Right ventricle myocardium superior (tissue), 1 donor: ENCODE measurements at regions of chr2 and their contacts with region 1.

Region 1: DNA sequence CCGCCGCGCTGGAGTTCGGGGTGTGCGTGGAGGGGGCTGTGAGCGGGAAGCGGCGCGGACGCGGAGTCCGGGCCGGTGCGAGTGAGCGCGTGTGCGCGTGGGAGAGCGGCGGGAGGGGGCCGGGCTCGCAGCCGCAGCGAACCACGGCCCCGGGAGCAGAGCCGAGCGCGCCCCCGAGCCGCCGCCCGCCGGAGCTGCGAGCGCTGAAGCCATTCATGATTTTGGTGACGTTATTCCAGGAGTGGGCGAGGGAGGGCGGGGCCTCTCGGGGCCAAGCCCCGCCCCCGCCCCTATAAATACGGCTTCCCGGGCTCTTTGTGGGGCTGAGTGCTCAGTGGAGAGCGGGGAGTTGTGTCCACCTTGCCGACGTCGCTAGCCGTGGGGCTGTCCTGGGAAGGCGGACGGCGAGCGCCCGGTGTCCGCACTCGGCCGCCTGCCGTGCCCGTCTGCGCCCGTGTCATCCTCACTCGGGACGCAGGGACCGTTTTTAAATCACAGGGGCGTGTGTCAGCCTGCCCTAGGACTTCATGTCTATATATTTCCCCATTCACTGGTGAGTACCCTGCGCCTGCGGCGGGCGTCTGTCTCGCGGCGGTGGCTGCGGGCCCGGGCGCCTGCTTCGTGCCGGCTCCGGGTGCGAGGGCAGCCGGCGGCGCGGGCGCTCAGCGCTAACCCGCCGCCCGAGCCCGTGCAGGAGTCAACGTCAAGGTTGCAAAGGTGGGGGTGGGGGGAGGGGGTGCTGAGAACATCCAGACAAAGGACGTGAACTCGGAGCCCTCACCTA is at the start of gene LBH:
- DNase-seq: peak; percentile 92
- ATAC-seq: peak; percentile 91
- total RNA-seq, gene LBH: 115 TPM

Region 2: GRCh38 chr2:30346471-30347169 is 115.2 kb after region 1 on chr2:
- intact Hi-C with region 1: loop called (anchors 5 kb)
- DNase-seq: peak; percentile 83
- ATAC-seq: peak; percentile 97